RWPE1 (cell line): ENCODE measurements at regions of chr5 and their contacts with region 1.

Region 1: DNA sequence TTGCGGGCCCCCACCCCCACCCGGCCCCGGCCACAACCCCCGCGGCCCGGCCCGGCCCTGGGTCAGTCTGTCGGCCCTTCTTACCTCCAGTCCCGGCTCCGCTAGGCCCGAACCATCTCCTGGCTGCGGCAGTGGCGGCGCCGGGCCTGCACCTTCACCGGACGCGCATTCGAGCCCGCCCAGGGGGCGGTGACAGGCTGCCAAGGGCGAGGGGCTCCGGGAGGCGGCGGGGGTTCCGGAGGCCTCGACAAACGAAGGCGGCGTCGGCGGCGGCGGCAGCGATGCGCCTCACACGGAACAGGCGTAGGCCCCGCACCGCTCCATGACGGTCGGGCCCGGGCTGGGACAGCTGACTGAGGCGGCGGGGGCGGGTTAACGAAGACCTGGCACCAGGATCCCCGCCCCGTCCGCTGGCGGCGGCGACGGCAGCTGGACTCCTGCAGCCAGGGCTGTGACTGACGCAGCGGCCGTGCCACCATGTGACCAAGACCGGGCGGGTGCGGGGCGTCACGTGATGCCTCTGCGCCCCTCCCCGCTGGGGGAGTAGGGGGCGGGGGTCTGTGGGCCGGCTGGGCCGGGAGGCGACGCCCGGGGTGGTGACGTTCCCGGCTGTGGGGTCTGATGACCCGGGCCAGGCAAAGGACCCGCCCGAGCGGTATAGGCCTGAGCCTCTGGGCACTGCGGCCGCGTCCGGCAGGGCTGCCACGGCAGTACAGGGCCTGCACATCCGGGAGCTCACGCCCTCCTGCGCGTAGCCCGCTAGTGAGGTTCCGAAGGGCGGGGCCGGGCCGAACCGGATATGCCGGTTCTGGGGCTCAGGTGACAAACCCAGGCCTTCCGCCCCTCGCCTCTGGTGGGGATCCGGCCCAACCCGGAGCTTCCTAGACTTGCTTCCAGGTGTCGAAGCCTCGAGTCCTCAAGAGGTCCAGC is at the start of gene AFF4:
- DNase-seq: peak; percentile 96
- H3K27ac ChIP-seq: peak within 1 kb of the TSS; percentile 94
- CTCF ChIP-seq: no peak

Region 2: GRCh38 chr5:133051580-133052332 is 88.3 kb after region 1 on chr5 and contains the start of gene HSPA4:
- CTCF ChIA-PET with region 1: no interaction called
- POLR2A ChIA-PET with region 1: interaction called, 21 read pairs
- DNase-seq: peak; percentile 99
- H3K27ac ChIP-seq: peak within 1 kb of the TSS; percentile 98
- CTCF ChIP-seq: no peak